Heart right ventricle (tissue), 16 donors: ENCODE measurements at regions of chr1 and their contacts with region 1.

Region 1: GRCh38 chr1:230753586-230754251 is 6.5 kb downstream of the CAPN9 start:
- DNase-seq: peak; percentile 43 to 52
- ATAC-seq: peak in 5 of 8 donors; percentile 62 to 90 (median 74)
- H3K4me3 ChIP-seq: peak overlapping the region in 3 of 10 donors; percentile 8 to 34 (median 13)
- H3K27ac ChIP-seq: peak overlapping the region in 5 of 10 donors; percentile 12 to 68 (median 51)
- H3K4me1 ChIP-seq: peaks cover 0 to 28% (median 16%) of the 10 kb centered on the region in 9 donors
- H3K27me3 ChIP-seq: no peaks in the 10 kb centered on the region
- CTCF ChIP-seq: no peak

Region 2: DNA sequence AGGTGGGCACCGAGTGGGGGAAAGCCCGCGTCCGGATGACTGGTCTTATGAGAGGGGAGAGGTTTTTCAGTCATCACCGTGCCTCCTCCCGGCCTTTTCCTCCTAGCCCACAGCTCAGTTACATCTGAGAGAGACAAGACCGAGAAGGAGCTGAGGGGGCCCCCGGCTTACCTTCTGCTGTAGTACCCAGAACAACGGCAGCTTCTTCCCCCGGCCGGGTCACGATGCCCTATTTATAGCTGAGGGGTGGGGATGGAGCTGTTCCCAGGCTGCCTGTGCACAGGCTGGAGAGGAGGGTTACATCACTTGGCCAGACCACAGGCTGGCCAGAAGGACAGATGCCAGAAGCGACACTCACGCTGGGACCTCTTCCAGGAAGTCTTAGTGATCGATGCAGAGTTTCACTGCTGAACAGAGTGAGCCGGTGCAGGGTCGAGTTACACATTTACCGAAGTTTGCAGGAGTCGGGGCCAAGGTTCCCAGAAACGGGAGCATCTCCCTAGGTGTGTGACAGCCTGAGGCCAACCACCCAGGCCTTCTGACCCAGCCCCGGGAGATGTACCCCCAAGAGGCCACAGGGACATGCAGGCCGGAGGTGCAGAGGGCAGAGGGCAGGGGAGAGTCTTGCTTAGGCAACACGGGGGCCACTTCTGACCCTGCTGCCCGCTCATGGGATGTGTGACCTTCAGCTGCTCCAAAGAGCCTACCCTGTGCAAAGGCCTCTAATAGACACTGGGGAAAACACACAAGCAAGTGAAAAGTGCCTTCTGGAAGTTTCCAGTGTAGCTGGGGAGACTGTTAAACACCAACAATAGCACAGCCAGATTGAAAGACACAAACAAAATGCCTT is 39.6 kb before region 1 on chr1 and contains the start of gene AGT:
- intact Hi-C with region 1: loop called in 1 of 10 experiments (anchors 5 kb)
- DNase-seq: peak; percentile 80 to 84
- ATAC-seq: peak; percentile 89 to 98 (median 95)
- H3K4me3 ChIP-seq: peak within 1 kb of the TSS in 9 of 10 donors; percentile 26 to 63 (median 55)
- H3K27ac ChIP-seq: peak within 1 kb of the TSS; percentile 66 to 89 (median 76)
- H3K4me1 ChIP-seq: peaks cover 0 to 55% (median 13%) of the 10 kb centered on the region in 9 donors
- H3K27me3 ChIP-seq: no peaks in the 10 kb centered on the region
- CTCF ChIP-seq: no peak
- total RNA-seq, gene AGT: 44.2 to 87.5 (median 63.3) TPM